IMR-90 (cell line): ENCODE measurements at regions of chr12 and their contacts with region 1.

Region 1: GRCh38 chr12:40010899-40011774 is 94.7 kb downstream of the SLC2A13 start:
- DNase-seq: peak; percentile 72
- ATAC-seq: peak; percentile 91
- H3K4me3 ChIP-seq: peak overlapping the region; percentile 11; the same call in 1 of the 2 replicates
- H3K27ac ChIP-seq: no peak overlapping the region
- H3K4me1 ChIP-seq: 0 out of 2 replicates have a peak, but pooled peaks cover 2% of the 10 kb centered on the region
- H3K27me3 ChIP-seq: no peaks in the 10 kb centered on the region
- CTCF ChIP-seq: peak; percentile 81
- POLR2A ChIP-seq: no peak
- RAD21 ChIP-seq: peak; percentile 67

Region 2: DNA sequence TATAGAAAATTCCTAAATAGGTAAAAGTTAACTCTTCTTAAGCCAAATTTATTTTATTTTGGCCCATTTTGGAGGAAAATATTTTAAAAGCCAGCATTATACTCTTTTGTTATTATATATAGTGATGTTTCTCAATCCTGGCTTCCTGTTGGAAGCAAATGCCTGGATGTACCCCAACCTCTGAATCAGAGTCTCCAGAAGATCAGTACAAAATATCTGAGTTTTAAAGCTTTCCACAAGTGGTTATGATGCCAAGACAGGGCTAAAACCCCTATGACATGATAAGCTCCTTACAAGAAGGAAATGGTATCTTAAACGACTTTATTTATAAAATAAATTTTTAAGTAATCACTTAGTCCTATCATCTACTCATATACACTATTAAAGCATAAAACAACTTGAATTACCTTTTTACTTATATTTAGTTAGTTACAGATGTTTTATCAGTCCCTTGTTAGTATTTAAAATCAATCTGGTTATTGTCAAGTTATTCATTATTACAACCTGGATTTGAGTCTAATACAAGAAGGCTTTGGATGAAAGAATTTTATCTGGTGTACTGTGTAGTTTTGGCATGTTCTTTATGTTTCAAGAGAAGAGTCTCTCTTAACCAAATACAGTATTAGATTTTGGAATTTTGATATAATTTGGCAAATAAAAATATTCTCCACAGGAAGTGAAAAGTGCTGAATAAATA is 143.4 kb before region 1 on chr12:
- CTCF ChIA-PET with region 1: no interaction called
- POLR2A ChIA-PET with region 1: no interaction called
- dilution Hi-C with region 1: no loop called
- in situ Hi-C with region 1: no loop called
- intact Hi-C with region 1: no loop called
- DNase-seq: no peak
- ATAC-seq: no peak
- H3K4me3 ChIP-seq: no peak overlapping the region
- H3K27ac ChIP-seq: no peak overlapping the region
- H3K4me1 ChIP-seq: no peaks in the 10 kb centered on the region
- H3K27me3 ChIP-seq: no peaks in the 10 kb centered on the region
- CTCF ChIP-seq: no peak
- POLR2A ChIP-seq: no peak
- RAD21 ChIP-seq: no peak

Region 3: GRCh38 chr12:40032433-40033241 is 21.5 kb after region 1 on chr12:
- CTCF ChIA-PET with region 1: interaction called, 14 read pairs
- POLR2A ChIA-PET with region 1: no interaction called
- dilution Hi-C with region 1: no loop called
- in situ Hi-C with region 1: no loop called
- intact Hi-C with region 1: no loop called
- DNase-seq: no peak
- ATAC-seq: no peak
- H3K4me3 ChIP-seq: no peak overlapping the region
- H3K27ac ChIP-seq: no peak overlapping the region
- H3K4me1 ChIP-seq: peaks cover 2% of the 10 kb centered on the region; the same call in 1 of the 2 replicates
- H3K27me3 ChIP-seq: no peaks in the 10 kb centered on the region
- CTCF ChIP-seq: no peak
- POLR2A ChIP-seq: no peak
- RAD21 ChIP-seq: no peak

Region 4: DNA sequence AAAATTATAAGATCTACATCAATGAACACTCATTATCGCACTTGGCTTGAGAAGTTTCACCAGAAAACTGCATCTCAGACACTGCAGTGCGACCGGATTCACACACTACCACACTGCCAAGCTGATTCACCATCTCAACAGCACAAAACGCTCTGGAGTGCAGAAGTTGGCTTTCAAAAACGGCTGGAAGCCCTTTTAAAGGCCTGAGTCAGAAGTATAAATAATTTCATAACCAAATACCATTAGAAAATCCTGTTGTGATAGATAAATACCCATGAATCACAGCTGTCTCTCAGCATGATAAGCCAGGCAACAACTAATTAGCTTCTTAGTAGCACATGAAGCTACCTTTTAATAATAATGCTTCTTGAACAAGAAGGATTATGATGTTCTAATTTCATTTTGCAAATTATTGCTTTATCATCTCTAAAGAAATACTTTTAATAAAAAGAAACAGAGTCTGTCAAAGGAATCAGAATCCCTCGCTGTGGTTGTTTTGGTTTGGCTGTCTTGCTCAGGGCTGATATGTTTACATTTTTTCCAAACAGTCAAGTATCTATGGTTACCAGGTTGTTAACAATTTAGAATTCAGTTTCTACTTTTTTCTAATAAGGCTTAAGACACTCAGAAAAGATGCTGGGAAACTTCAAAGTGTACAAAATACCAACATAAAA is 43.6 kb after region 1 on chr12:
- CTCF ChIA-PET with region 1: no interaction called
- POLR2A ChIA-PET with region 1: no interaction called
- dilution Hi-C with region 1: no loop called
- in situ Hi-C with region 1: no loop called
- intact Hi-C with region 1: no loop called
- DNase-seq: peak; percentile 80
- ATAC-seq: peak; percentile 91
- H3K4me3 ChIP-seq: no peak overlapping the region
- H3K27ac ChIP-seq: no peak overlapping the region
- H3K4me1 ChIP-seq: no peaks in the 10 kb centered on the region
- H3K27me3 ChIP-seq: no peaks in the 10 kb centered on the region
- CTCF ChIP-seq: no peak
- POLR2A ChIP-seq: no peak
- RAD21 ChIP-seq: 0 out of 2 replicates have a peak, but pooled peaks have one; percentile 1